ENCODE measurements at regions of chr21 and their contacts with region 1.

Region 1: GRCh38 chr21:25895565-25896205 is 160.9 kb downstream of the GABPA start:
- DNase-seq: no peak
- H3K4me3 ChIP-seq: no peak overlapping the region
- H3K27ac ChIP-seq: no peak overlapping the region
- H3K4me1 ChIP-seq: no peaks in the 10 kb centered on the region
- H3K27me3 ChIP-seq: no peaks in the 10 kb centered on the region
- CTCF ChIP-seq: peak in 2 of 3 experiments; percentile 24 to 43; a peak in 1 of 4 replicates
- EP300 ChIP-seq: no peak
- POLR2A ChIP-seq: no peak
- RAD21 ChIP-seq: peak; percentile 68 to 70

Region 2: DNA sequence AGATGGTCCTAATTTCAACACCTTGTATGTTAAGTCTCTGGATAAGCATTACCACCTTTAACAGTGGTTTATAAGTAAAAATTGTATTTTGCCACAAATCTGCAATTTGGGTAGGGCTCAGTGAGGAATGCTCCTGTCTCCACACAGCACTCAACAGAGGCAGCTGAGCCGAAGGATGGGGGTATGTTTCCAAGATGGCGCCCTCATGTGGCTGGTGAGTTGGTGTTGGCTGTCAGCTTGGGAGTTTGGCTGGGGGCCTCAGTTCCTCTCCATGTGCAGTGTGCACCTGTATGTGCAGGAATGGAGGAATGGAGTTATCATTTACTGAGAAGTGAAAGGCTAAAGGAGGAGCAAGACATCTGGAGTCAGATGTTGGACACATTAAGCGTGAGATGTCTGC is 24.1 kb before region 1 on chr21:
- CTCF ChIA-PET with region 1: interaction called, 10 read pairs
- POLR2A ChIA-PET with region 1: no interaction called
- DNase-seq: peak in 1 of 2 experiments; percentile 58
- H3K4me3 ChIP-seq: no peak overlapping the region
- H3K27ac ChIP-seq: no peak overlapping the region
- H3K4me1 ChIP-seq: peaks cover 0 to 2% (median 0%) of the 10 kb centered on the region in 4 experiments; a peak in 2 of 7 replicates
- H3K27me3 ChIP-seq: no peaks in the 10 kb centered on the region
- CTCF ChIP-seq: peak; percentile 36 to 59 (median 59); a peak in 3 of 4 replicates
- EP300 ChIP-seq: no peak
- POLR2A ChIP-seq: no peak
- RAD21 ChIP-seq: peak; percentile 15 to 34; a peak in 3 of 4 replicates

Region 3: DNA sequence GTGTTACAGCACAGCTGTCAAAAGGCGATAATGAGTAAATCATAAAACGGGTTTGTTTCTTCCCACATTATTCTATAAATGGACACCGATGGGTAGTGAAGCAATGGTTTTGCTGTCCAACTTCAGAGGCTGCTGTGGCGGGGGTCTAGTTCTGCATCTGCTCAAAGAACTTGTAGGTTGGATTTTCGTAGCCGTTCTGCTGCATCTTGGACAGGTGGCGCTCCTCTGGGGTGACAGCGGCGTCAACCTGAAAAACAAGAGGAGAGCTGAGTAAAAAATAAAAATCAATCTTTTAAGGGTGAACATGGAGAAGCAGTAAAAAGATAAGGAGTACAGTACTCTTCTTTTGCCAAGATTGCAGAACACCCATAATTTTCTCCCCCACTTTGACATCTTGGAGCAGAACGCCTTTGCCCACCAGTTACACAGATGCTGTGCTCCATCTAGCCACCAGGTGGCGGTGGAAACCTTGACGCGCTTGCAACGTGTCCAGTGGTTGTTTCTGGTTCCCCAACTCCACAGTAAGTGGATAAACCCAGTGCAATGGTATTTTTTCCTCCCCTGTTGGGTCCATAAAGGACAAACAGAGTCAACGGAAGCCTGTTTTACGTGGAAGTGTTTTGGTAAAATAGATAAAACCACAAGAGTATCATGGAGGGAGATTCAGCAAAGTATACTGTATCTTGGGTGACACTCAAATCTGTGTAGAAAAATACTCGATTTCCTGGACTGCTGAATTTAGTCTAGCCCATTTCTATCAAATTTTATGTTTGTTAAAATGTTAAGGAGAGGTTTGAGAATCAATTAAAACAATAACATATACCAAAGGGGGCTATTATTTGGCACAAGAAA is 13.9 kb before region 1 on chr21:
- CTCF ChIA-PET with region 1: interaction called, 11 read pairs
- POLR2A ChIA-PET with region 1: no interaction called
- DNase-seq: peak in 1 of 2 experiments; percentile 80
- H3K4me3 ChIP-seq: no peak overlapping the region
- H3K27ac ChIP-seq: no peak overlapping the region
- H3K4me1 ChIP-seq: no peaks in the 10 kb centered on the region
- H3K27me3 ChIP-seq: no peaks in the 10 kb centered on the region
- CTCF ChIP-seq: peak; percentile 82 to 92 (median 91)
- EP300 ChIP-seq: no peak
- POLR2A ChIP-seq: no peak
- RAD21 ChIP-seq: peak; percentile 81 to 86

Region 4: DNA sequence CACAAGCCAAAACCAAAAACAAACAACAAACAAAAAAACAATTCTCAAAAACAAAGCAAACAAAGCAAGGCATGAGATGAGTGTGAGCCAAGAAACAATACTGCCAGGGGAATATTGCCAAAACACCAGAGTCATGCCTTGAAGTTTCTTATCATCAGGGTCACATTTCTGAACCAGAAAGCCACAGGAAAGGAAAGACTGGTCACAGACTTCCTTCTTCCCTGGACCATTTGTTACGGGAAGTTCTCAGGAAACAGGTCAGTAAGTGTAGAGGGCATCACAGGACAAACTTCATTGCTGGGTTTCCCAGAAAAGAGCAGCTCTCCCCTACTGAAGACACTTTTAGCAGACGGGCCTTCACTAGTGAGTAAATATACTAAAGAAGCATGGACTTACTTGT is 30.3 kb after region 1 on chr21:
- CTCF ChIA-PET with region 1: no interaction called
- POLR2A ChIA-PET with region 1: no interaction called
- DNase-seq: no peak
- H3K4me3 ChIP-seq: no peak overlapping the region
- H3K27ac ChIP-seq: no peak overlapping the region
- H3K4me1 ChIP-seq: no peaks in the 10 kb centered on the region
- H3K27me3 ChIP-seq: no peaks in the 10 kb centered on the region
- CTCF ChIP-seq: no peak
- EP300 ChIP-seq: no peak
- POLR2A ChIP-seq: no peak
- RAD21 ChIP-seq: no peak